ENCODE measurements at regions of chr12 and their contacts with region 1.

Region 1: GRCh38 chr12:32312049-32312670 is 87.2 kb upstream of the FGD4 start:
- DNase-seq: peak in 1 of 2 donors; percentile 71
- ATAC-seq: peak; percentile 48 to 59 (median 57)
- H3K4me3 ChIP-seq: no peak overlapping the region
- H3K4me3 Mint-ChIP-seq: no peak overlapping the region
- H3K27ac ChIP-seq: no peak overlapping the region
- H3K27ac Mint-ChIP-seq: no peak overlapping the region
- H3K4me1 ChIP-seq: no peaks in the 10 kb centered on the region
- H3K4me1 Mint-ChIP-seq: no peaks in the 10 kb centered on the region
- H3K27me3 ChIP-seq: no peaks in the 10 kb centered on the region
- H3K27me3 Mint-ChIP-seq: no peaks in the 10 kb centered on the region
- CTCF ChIP-seq: peak; percentile 58

Region 2: DNA sequence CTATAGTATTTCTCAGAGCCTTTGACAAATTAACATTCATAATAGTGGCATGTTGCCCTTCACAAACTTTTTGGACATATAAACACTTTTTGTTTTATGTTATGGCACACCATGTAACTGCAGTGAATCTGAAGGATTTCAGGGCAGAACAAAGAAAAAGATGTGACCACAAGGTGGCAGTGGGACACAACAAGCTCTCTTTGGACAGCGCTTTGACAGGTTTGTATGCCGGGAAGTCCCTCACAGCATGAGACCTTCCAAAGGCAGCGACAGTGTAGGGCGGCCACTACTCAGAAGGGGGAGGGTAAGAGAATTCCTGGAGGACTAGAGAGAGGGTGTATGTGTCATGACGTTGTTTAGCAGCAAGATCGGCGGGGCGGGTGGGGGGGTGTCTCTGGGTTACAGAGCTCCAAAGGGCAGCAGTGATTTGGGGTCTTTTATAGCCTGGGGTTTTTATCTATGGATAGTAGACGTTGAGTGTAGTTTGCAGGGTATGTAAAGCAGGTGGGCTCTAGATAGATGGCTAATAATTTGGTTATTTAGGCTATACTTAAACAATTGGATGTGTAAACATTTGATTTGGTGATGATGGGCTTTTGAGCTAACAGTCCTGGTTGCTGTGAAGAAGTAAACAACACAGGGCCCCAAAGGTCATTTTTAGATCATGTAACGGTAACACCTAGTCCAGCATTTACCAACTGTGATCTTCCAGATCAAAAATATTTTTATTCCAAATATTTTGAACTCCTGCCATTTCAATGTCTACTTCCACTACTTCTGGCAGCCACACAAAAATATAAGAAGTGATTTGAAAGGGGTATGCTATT is 629.8 kb before region 1 on chr12:
- intact Hi-C with region 1: loop called (anchors 2 kb)
- DNase-seq: peak; percentile 47 to 91
- ATAC-seq: peak; percentile 93 to 99 (median 93)
- H3K4me3 ChIP-seq: no peak overlapping the region
- H3K4me3 Mint-ChIP-seq: no peak overlapping the region
- H3K27ac ChIP-seq: peak overlapping the region; percentile 8
- H3K27ac Mint-ChIP-seq: peak overlapping the region; percentile 34 to 84
- H3K4me1 ChIP-seq: peaks cover 9% of the 10 kb centered on the region
- H3K4me1 Mint-ChIP-seq: peaks cover 4 to 16% of the 10 kb centered on the region in 2 donors
- H3K27me3 ChIP-seq: no peaks in the 10 kb centered on the region
- H3K27me3 Mint-ChIP-seq: no peaks in the 10 kb centered on the region
- CTCF ChIP-seq: peak; percentile 74

Measured in natural killer cell (primary cell).